ENCODE measurements at regions of chr3 and their contacts with region 1.

Region 1: GRCh38 chr3:141231101-141231935 is at the start of gene PXYLP1:
- DNase-seq: peak; percentile 95
- H3K4me3 Mint-ChIP-seq: peak within 1 kb of the TSS; percentile 85
- H3K27ac Mint-ChIP-seq: peak within 1 kb of the TSS; percentile 87
- H3K4me1 Mint-ChIP-seq: peaks cover 25% of the 10 kb centered on the region
- H3K27me3 Mint-ChIP-seq: no peaks in the 10 kb centered on the region
- total RNA-seq, gene PXYLP1: 9.0 to 11.6 TPM

Region 2: GRCh38 chr3:141151439-141151838 is 79.9 kb before region 1 on chr3:
- CTCF ChIA-PET with region 1: no interaction called
- POLR2A ChIA-PET with region 1: no interaction called
- intact Hi-C with region 1: no loop called
- DNase-seq: no peak
- H3K4me3 Mint-ChIP-seq: no peak overlapping the region
- H3K27ac Mint-ChIP-seq: no peak overlapping the region
- H3K4me1 Mint-ChIP-seq: no peaks in the 10 kb centered on the region
- H3K27me3 Mint-ChIP-seq: peaks cover 6% of the 10 kb centered on the region

Region 3: DNA sequence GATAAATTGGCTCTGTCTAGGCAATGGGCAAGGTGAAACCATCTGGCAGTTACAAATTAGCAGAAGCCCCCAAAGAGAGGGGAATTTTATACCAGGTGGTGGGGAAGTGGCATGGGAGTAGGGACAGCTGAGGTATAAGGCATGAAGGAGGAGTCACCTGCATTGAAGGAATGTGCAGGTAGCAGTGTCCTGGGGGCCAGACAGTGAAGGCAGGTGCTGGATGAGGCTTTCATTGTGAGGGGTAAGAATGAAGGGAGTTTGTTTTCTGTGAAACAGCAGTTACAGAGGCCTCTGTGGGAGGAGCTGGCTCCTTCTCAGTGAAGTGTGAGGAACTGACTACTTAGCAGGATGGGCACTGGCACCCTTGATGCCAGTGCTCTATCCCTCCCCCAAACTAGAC is 18.8 kb before region 1 on chr3:
- CTCF ChIA-PET with region 1: no interaction called
- POLR2A ChIA-PET with region 1: no interaction called
- intact Hi-C with region 1: no loop called
- DNase-seq: no peak
- H3K4me3 Mint-ChIP-seq: no peak overlapping the region
- H3K27ac Mint-ChIP-seq: no peak overlapping the region
- H3K4me1 Mint-ChIP-seq: no peaks in the 10 kb centered on the region
- H3K27me3 Mint-ChIP-seq: no peaks in the 10 kb centered on the region

Region 4: GRCh38 chr3:141243271-141243707 is 12.0 kb after region 1 on chr3:
- CTCF ChIA-PET with region 1: interaction called, 31 read pairs
- POLR2A ChIA-PET with region 1: interaction called, 9 read pairs
- intact Hi-C with region 1: no loop called
- DNase-seq: peak; percentile 72
- H3K4me3 Mint-ChIP-seq: peak overlapping the region; percentile 25
- H3K27ac Mint-ChIP-seq: no peak overlapping the region
- H3K4me1 Mint-ChIP-seq: peaks cover 22% of the 10 kb centered on the region
- H3K27me3 Mint-ChIP-seq: no peaks in the 10 kb centered on the region

Region 5: DNA sequence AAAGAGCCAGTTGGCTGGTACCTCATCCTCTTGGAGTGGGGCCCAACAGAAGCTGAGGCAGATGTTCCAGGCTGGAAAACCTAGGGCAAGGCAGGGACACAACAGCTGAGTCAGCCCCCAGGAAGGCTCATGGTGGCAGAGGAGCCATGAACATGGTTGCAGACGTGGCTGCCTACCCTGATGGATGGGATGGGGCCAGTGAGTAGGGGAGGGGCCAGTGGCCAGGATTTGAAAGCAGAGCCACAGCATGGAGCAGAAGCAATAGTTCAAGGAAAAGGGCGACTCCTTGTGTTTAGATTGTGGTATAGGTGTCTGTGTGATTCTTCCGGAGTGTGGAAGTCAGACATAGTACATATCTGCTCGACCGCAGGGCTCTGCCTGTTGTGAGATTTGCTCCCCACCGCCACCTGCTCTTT is 24.5 kb after region 1 on chr3:
- CTCF ChIA-PET with region 1: interaction called, 42 read pairs
- POLR2A ChIA-PET with region 1: interaction called, 21 read pairs
- intact Hi-C with region 1: loop called (anchors 1 kb)
- DNase-seq: peak; percentile 63
- H3K4me3 Mint-ChIP-seq: no peak overlapping the region
- H3K27ac Mint-ChIP-seq: no peak overlapping the region
- H3K4me1 Mint-ChIP-seq: peaks cover 22% of the 10 kb centered on the region
- H3K27me3 Mint-ChIP-seq: no peaks in the 10 kb centered on the region

Region 6: GRCh38 chr3:141279077-141279967 is 48.0 kb after region 1 on chr3:
- CTCF ChIA-PET with region 1: interaction called, 84 read pairs
- POLR2A ChIA-PET with region 1: interaction called, 5 read pairs
- intact Hi-C with region 1: loop called (anchors 1 kb)
- DNase-seq: no peak
- H3K4me3 Mint-ChIP-seq: no peak overlapping the region
- H3K27ac Mint-ChIP-seq: no peak overlapping the region
- H3K4me1 Mint-ChIP-seq: peaks cover 20% of the 10 kb centered on the region
- H3K27me3 Mint-ChIP-seq: no peaks in the 10 kb centered on the region

Region 7: GRCh38 chr3:141311496-141312353 is 80.4 kb after region 1 on chr3:
- CTCF ChIA-PET with region 1: interaction called, 17 read pairs
- POLR2A ChIA-PET with region 1: interaction called, 14 read pairs
- intact Hi-C with region 1: no loop called
- DNase-seq: peak; percentile 100
- H3K4me3 Mint-ChIP-seq: peak overlapping the region; percentile 89
- H3K27ac Mint-ChIP-seq: peak overlapping the region; percentile 90
- H3K4me1 Mint-ChIP-seq: peaks cover 49% of the 10 kb centered on the region
- H3K27me3 Mint-ChIP-seq: no peaks in the 10 kb centered on the region

Measured in activated CD4-positive, alpha-beta memory T cell treated with anti-CD3 and anti-CD28 coated beads for 36 hours (primary cell).